HepG2 (cell line): ENCODE measurements at regions of chr2 and their contacts with region 1.

Region 1: GRCh38 chr2:191846515-191847476 is at the start of gene CAVIN2:
- DNase-seq: peak; percentile 95
- ATAC-seq: peak; percentile 87
- H3K4me3 ChIP-seq: peak within 1 kb of the TSS; percentile 67 to 87 (median 76)
- H3K27ac ChIP-seq: peak within 1 kb of the TSS; percentile 60
- H3K4me1 ChIP-seq: peaks cover 79% of the 10 kb centered on the region
- H3K27me3 ChIP-seq: no peaks in the 10 kb centered on the region; a peak in 1 of 5 replicates
- CTCF ChIP-seq: peak; percentile 11; the same call in 1 of the 2 replicates
- EP300 ChIP-seq: no peak
- POLR2A ChIP-seq: peak; percentile 49 to 74
- RAD21 ChIP-seq: no peak
- total RNA-seq, gene CAVIN2: 7.6 and 11.2 TPM in 2 replicates

Region 2: GRCh38 chr2:191862156-191862775 is 15.5 kb after region 1 on chr2:
- CTCF ChIA-PET with region 1: no interaction called
- POLR2A ChIA-PET with region 1: interaction called, 69 read pairs
- in situ Hi-C with region 1: no loop called
- intact Hi-C with region 1: loop called (anchors 1 kb)
- DNase-seq: no peak
- ATAC-seq: no peak
- H3K4me3 ChIP-seq: no peak overlapping the region
- H3K27ac ChIP-seq: no peak overlapping the region
- H3K4me1 ChIP-seq: peaks cover 79% of the 10 kb centered on the region
- H3K27me3 ChIP-seq: no peaks in the 10 kb centered on the region
- CTCF ChIP-seq: no peak
- EP300 ChIP-seq: no peak
- POLR2A ChIP-seq: no peak
- RAD21 ChIP-seq: no peak

Region 3: DNA sequence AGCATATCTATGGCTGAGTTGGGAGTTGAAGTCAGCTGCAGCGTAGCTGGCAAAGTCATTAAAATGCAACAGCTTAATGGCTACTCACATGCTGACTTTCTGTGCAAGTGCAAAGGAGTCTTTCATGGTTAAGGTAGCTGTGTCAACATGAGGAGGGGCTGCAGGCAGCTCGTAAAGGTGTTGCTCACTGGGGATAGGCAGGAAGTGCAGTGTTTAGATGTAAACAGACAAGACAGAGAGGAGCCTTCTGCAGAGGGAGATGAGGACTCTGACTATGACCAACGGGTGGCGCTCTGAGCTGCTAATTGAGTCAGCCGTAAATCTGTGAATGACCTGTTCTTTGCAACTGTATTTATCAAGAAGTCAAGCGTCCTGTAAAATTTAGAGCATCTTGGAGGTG is 22.4 kb after region 1 on chr2:
- CTCF ChIA-PET with region 1: no interaction called
- POLR2A ChIA-PET with region 1: interaction called, 69 read pairs
- in situ Hi-C with region 1: no loop called
- intact Hi-C with region 1: loop called (anchors 1 kb)
- DNase-seq: peak; percentile 67
- ATAC-seq: peak; percentile 8; the same call in 1 of the 3 replicates
- H3K4me3 ChIP-seq: no peak overlapping the region
- H3K27ac ChIP-seq: peak overlapping the region; percentile 1
- H3K4me1 ChIP-seq: peaks cover 69% of the 10 kb centered on the region
- H3K27me3 ChIP-seq: no peaks in the 10 kb centered on the region
- CTCF ChIP-seq: peak; percentile 74
- EP300 ChIP-seq: peak in 1 of 2 experiments; percentile 64; a peak in 1 of 4 replicates
- POLR2A ChIP-seq: no peak
- RAD21 ChIP-seq: peak; percentile 38; the same call in 1 of the 2 replicates

Region 4: GRCh38 chr2:191881982-191882816 is 35.4 kb after region 1 on chr2:
- CTCF ChIA-PET with region 1: no interaction called
- POLR2A ChIA-PET with region 1: interaction called, 4 read pairs
- in situ Hi-C with region 1: no loop called
- intact Hi-C with region 1: loop called (anchors 1 kb)
- DNase-seq: peak; percentile 92
- ATAC-seq: peak; percentile 96
- H3K4me3 ChIP-seq: no peak overlapping the region
- H3K27ac ChIP-seq: peak overlapping the region; percentile 62
- H3K4me1 ChIP-seq: peaks cover 65% of the 10 kb centered on the region
- H3K27me3 ChIP-seq: no peaks in the 10 kb centered on the region
- CTCF ChIP-seq: no peak
- EP300 ChIP-seq: peak; percentile 60 to 92; a peak in 3 of 4 replicates
- POLR2A ChIP-seq: no peak
- RAD21 ChIP-seq: 0 out of 2 replicates have a peak, but pooled peaks have one; percentile 27

Region 5: GRCh38 chr2:191907545-191907944 is 60.7 kb after region 1 on chr2:
- CTCF ChIA-PET with region 1: no interaction called
- POLR2A ChIA-PET with region 1: no interaction called
- in situ Hi-C with region 1: no loop called
- intact Hi-C with region 1: loop called (anchors 2 kb)
- DNase-seq: peak; percentile 34
- ATAC-seq: peak; percentile 92
- H3K4me3 ChIP-seq: no peak overlapping the region
- H3K27ac ChIP-seq: no peak overlapping the region
- H3K4me1 ChIP-seq: no peaks in the 10 kb centered on the region; the same call in 1 of the 2 replicates
- H3K27me3 ChIP-seq: no peaks in the 10 kb centered on the region
- CTCF ChIP-seq: peak; percentile 47; the same call in 1 of the 2 replicates
- EP300 ChIP-seq: no peak
- POLR2A ChIP-seq: no peak
- RAD21 ChIP-seq: no peak

Region 6: GRCh38 chr2:192029089-192029488 is 182.3 kb after region 1 on chr2:
- CTCF ChIA-PET with region 1: no interaction called
- POLR2A ChIA-PET with region 1: no interaction called
- in situ Hi-C with region 1: no loop called
- intact Hi-C with region 1: loop called (anchors 10 kb)
- DNase-seq: no peak
- ATAC-seq: peak; percentile 76
- H3K4me3 ChIP-seq: no peak overlapping the region
- H3K27ac ChIP-seq: no peak overlapping the region
- H3K4me1 ChIP-seq: no peaks in the 10 kb centered on the region
- H3K27me3 ChIP-seq: no peaks in the 10 kb centered on the region
- CTCF ChIP-seq: peak; percentile 31; the same call in 1 of the 2 replicates
- EP300 ChIP-seq: no peak
- POLR2A ChIP-seq: no peak
- RAD21 ChIP-seq: no peak